CD14-positive monocyte (primary cell): ENCODE measurements at regions of chr10 and their contacts with region 1.

Region 1: DNA sequence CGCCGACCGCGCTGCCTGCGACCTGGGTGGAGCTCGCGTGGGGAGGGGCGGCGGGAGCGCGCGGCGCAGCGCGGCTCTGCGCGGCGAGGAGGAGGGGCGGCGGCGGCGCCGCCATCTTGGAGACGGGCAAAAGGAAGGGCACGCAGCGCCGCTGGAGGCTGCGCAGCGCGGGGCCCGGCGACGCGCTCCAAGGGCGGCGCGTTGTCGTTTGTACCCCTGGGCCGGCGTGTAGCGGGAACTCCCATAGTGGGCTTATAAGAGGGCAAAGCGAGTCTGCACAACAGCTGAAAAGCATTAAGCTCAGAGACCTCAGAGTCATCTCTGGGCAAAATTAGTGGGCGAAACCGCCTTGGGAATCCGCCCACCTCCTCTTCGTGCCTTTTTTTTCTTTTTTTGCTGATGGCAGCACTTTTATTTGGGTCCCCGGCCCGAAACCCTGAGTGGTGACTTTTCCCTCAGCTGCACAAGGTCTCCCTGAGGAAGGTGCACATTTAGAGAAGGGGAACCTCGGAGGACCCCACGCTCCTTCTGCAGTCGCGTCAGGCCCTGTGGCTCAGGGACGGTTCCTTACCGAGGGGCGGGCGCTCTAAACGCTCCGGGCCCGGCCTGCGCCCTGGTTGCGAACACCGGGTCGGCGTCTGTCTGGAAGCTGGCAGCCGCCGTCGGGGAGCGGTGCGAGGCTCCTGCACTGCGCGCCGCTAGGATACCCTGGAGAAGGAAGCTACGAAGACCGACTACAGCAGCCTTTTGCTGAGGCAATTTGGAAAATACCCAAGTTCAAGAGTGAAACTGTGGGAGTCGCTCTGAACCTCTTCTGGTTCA is 428 bp upstream of the MCMBP start:
- DNase-seq: peak; percentile 80 to 83 (median 81)
- H3K4me3 ChIP-seq: peak overlapping the region; percentile 81 to 88 (median 87)
- H3K4me3 Mint-ChIP-seq: peak overlapping the region; percentile 87 to 95
- H3K27ac ChIP-seq: peak overlapping the region; percentile 80 to 89
- H3K27ac Mint-ChIP-seq: peak overlapping the region; percentile 91 to 99 (median 95)
- H3K4me1 ChIP-seq: peaks cover 31 to 49% of the 10 kb centered on the region in 2 donors
- H3K4me1 Mint-ChIP-seq: peaks cover 47% of the 10 kb centered on the region
- H3K27me3 ChIP-seq: no peaks in the 10 kb centered on the region
- H3K27me3 Mint-ChIP-seq: no peaks in the 10 kb centered on the region
- CTCF ChIP-seq: no peak

Region 2: DNA sequence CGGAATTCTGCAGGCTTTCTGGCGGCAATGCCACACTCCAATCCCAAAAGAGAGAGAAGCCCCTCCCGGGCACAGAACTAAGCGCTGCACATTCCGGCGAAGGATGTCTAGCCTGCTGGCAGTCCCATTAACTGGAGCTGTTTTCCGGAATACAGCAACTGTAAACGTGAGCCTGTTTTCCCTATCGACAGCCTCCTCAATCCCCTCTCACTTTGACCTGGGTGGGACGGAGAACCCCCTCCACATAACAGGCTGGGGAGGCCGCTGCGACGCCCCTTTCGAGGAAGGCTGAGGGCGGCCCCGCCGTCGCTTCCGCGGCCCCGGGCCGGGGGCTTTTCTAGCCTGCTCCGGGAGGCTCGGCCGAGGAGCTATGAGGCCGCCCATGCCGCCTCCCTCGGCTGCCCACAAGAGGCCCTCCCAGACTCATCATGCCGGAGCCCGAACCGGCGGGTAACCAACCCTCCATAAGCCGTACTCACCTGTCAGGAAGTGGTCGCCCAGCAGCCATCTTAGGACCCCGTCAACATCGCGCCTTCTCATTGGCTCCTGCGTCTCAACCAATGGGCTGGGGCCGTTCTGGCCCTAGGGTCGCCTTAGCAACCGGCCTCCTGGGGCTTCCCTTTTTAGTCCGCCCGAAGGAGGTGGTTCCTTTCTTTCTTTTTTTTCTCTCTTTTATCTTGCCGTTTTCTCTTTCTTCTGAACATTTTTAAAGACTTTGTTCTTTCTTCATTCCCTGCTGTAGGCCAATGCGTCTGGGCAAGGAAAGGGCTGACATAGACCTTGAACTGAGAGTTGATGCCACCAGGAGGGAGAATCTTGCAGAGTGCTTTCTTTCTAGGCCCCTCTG is 1531.1 kb before region 1 on chr10 and contains the start of gene FAM204A:
- intact Hi-C with region 1: loop called in 1 of 2 experiments (anchors 10 kb)
- DNase-seq: peak; percentile 90 to 97 (median 95)
- H3K4me3 ChIP-seq: peak within 1 kb of the TSS; percentile 84 to 98 (median 97)
- H3K4me3 Mint-ChIP-seq: peak within 1 kb of the TSS; percentile 85 to 93
- H3K27ac ChIP-seq: peak within 1 kb of the TSS; percentile 6 to 91
- H3K27ac Mint-ChIP-seq: peak within 1 kb of the TSS; percentile 77 to 94 (median 90)
- H3K4me1 ChIP-seq: peaks cover 21 to 28% of the 10 kb centered on the region in 2 donors
- H3K4me1 Mint-ChIP-seq: peaks cover 33% of the 10 kb centered on the region
- H3K27me3 ChIP-seq: no peaks in the 10 kb centered on the region
- H3K27me3 Mint-ChIP-seq: peaks cover 5 to 8% (median 6%) of the 10 kb centered on the region in 3 donors
- CTCF ChIP-seq: no peak
- polyA plus RNA-seq, gene FAM204A: 24.6 to 191 (median 139) TPM

Region 3: DNA sequence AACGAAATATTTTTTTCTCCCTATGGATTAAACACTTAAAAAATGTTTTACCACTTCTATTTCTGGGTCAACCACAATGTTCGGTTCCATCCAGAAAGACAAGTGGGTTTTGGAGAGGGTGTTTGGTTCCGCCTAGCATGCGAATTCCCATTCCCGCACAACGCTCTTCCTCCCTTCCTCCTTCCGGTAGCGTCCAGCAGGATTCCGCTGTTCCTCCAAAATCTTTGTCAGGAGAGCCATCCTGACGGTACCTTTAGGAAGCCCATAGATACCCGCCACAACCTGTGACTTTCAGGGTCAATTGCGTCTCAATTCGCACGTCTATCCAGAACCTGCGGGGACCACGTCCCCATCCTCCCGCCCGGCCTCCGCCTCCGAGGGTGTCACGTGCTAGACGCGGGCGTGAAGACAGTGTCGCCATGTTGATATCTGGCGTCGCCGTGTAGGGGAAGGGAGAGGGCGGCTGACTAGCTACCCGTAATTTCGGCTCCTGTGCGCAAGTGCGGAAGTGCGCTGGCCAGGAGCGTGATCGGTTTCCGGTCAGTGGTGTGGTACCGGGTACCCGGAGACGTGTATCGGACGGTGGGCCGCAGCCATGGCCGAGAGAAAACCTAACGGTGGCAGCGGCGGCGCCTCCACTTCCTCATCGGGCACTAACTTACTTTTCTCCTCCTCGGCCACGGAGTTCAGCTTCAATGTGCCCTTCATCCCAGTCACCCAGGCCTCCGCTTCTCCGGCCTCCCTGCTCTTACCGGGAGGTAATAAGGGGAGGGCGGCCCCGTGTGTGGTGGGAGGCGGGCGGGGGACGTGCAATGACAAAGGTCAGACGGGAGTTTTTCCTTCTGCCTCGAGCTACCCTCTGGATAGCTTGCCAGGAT is 19.4 kb after region 1 on chr10 and contains the start of gene SEC23IP:
- intact Hi-C with region 1: loop called in 1 of 2 experiments (anchors 2 kb)
- DNase-seq: peak; percentile 95 to 97 (median 96)
- H3K4me3 ChIP-seq: peak within 1 kb of the TSS; percentile 85 to 97 (median 87)
- H3K4me3 Mint-ChIP-seq: peak within 1 kb of the TSS; percentile 92 to 99
- H3K27ac ChIP-seq: peak within 1 kb of the TSS; percentile 76 to 94
- H3K27ac Mint-ChIP-seq: peak within 1 kb of the TSS; percentile 91 to 97 (median 93)
- H3K4me1 ChIP-seq: peaks cover 38 to 57% of the 10 kb centered on the region in 2 donors
- H3K4me1 Mint-ChIP-seq: peaks cover 53% of the 10 kb centered on the region
- H3K27me3 ChIP-seq: no peaks in the 10 kb centered on the region
- H3K27me3 Mint-ChIP-seq: peaks cover 0 to 1% (median 0%) of the 10 kb centered on the region in 3 donors
- CTCF ChIP-seq: no peak
- polyA plus RNA-seq, gene SEC23IP: 11.5 to 43.8 (median 42.0) TPM